ENCODE measurements at regions of chr19 and their contacts with region 1.

Region 1: DNA sequence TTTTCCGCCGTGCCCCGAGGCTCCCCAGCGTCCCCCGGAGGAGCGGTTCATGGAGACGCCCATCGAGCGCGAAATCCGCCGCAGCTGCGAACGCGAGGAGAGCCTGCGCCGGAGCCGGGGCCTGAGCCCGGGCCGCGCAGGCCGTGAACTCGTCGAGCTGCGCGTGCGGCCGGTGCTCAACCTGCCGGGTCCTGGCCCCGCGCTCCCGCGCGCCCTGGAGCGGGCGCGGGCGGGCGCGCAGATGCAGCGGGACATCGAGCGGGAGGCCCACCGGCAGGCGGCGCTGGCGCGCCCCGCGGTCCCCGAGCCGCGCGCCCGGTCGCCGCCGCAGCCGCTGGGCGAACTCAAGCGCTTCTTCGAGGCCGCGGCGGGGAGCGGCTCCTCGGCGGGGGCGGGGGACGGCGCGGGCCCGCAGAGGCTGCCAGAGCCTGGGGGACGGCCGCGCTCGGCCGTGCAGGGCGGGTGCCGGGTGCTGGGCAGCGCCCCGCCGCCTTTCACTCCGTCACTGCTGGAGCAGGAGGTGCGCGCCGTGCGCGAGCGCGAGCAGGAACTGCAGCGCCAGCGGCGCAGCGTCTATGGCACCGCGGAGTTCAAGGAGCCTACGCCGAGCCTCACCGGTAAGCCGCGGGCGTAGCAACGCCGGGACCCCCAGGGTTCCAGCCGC is 807 bp downstream of the MISP3 start:
- DNase-seq: no peak
- H3K4me3 ChIP-seq: peak overlapping the region; percentile 68
- CTCF ChIP-seq: peak; percentile 29

Region 2: DNA sequence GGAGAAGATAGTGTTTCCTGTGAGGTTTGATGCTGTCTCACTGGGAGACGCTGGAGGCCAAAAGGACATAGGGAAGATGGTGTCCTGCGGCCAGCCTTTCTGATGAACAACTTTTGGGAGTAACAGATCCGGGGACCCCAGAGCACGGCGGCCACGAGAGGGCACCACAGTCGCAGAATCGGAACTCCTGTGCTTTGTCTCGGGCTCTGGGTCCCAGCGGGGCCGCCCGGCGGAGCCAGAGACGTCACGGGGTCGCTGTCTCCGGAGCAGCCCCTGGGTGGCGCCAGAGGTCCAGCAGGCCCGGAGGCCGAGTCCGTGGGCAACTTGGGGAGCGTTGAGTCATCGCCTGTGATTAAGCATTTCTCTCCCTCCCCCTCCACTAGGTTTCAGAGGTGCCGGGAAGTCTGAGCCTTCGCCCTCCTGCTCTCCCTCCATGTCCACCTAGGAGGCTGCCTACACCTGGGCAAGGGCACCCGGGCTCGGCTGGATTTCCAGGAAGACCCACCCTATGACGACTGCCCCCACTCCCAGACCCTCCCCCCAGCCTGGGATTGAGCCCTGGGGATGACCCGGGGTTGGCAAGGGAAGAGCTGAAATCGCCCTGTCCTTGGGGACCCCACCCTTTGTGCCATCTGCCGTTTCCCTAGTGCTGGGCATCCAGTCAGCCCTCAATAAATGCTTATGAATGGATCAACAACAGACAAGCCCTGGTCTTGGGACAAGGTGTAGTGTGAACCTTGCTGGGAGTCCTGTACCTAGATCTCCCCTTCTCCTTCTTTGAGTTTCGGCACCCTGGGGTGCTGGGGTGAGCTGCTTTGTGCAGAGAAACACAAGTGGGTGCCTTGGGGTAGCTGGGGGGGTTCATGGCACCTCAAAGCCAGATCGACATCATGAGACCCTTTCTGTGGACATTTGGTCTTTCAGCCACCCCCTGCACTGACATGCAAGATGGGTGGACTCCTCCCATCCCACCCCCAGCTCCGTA is 193.0 kb before region 1 on chr19:
- CTCF ChIA-PET with region 1: interaction called, 184 read pairs
- POLR2A ChIA-PET with region 1: no interaction called
- DNase-seq: peak; percentile 51
- H3K4me3 ChIP-seq: peak overlapping the region; percentile 31
- CTCF ChIP-seq: peak; percentile 95

Region 3: GRCh38 chr19:13905938-13906904 is 167.2 kb before region 1 on chr19 and contains the starts of genes BRME1 and CC2D1A:
- CTCF ChIA-PET with region 1: interaction called, 12 read pairs
- POLR2A ChIA-PET with region 1: no interaction called
- DNase-seq: no peak
- H3K4me3 ChIP-seq: peak within 1 kb of the TSS; percentile 87
- CTCF ChIP-seq: no peak

Region 4: DNA sequence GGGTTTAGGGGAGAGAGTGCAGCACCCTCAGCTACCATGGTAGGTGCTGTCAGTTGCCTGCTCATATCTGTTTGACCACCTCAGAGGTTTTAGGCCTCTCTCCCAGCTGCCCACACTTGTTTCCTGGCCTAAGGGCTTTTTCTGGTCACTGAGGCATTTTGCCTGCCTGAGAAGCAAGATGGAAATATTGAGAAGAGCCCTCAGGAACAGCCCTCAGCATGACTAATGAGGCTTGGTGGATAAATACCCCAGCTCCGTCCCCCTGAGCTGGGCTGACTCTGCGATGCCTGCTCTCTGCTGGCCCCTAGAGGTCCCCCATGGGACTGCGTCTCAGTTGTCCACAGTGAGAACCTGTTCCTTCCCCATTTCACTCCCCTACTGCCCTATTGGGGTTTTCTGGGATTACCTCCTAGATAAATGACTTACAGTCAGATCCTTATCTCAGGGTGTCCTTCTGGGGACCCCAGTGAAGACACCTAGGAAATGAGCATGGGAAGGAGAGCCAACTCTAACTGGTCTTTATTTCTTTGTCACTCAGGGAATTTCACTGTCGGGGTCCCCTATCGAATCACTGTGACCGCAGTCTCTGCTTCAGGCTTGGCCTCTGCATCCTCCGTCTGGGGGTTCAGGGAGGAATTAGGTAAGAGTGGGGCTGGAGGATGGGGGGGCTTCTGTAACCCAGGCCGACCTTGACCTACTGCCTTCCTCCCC is 24.8 kb before region 1 on chr19:
- CTCF ChIA-PET with region 1: interaction called, 14 read pairs
- POLR2A ChIA-PET with region 1: no interaction called
- DNase-seq: no peak
- H3K4me3 ChIP-seq: no peak overlapping the region
- CTCF ChIP-seq: peak; percentile 67

Region 5: DNA sequence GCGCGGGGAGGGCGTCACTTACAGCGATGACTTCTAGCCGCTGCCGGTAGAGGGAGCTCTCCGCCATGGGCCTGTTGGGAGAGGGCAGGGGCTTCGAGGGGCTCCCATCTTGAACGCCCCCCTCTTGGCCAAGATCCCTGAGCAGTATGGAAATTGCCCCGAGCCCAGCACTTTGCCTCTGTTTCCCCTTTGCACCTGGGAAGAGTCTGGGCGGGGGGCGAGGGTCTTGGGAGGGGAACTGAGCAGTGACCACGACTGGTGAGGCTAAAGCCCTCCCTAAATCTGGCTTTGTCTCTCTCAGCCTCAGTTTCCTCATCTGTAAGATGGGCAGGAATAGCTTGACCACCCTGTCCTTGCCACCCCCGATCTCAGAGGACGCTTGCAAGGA is 14.3 kb before region 1 on chr19:
- CTCF ChIA-PET with region 1: interaction called, 103 read pairs
- POLR2A ChIA-PET with region 1: no interaction called
- DNase-seq: no peak
- H3K4me3 ChIP-seq: no peak overlapping the region
- CTCF ChIP-seq: peak; percentile 74

Region 6: DNA sequence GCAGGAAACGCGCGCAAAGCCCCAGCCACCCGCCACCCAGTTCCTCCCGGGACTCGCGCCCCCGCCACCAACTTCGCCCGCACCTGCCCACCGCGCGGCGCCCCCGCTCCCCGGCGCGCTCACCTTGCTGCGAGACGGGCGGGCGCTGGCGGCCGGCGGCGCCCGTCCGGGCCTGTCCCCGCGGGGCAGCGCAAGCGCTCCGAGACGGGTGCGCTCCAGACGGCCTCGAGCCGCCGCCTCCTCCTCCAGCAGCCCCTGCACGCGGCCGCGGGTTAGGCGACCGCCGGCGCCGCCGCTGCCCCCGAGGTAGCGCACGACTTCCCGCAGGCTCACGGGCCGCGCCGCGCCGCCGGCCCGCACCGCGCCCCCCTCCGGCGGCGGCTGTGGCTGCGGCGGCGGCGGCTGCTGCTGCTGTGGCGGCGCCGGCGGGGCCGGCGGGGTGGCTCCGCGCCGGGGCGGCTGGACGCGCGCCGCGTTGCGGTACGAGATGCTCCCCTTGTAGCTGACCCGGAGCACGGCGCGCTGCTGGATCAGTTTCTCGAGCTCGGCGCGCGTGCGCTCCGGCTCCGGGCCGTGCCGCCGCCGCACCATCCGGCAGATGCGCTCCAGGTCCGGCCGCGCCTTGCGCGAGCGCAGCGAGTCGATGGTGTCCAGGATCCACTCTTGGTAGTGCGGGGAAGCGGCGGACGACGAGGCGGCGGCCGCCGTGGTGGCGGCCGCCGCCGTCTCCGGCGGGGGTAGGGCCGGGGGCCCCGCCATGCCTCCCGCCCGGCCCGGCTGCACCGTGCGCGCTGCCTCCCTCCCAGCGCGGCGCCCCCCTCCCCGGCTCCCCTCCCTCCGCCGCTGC is 16.5 kb after region 1 on chr19:
- CTCF ChIA-PET with region 1: interaction called, 49 read pairs
- POLR2A ChIA-PET with region 1: no interaction called
- DNase-seq: no peak
- H3K4me3 ChIP-seq: peak overlapping the region; percentile 79
- CTCF ChIP-seq: no peak